Panc1 (cell line): ENCODE measurements at regions of chr2 and their contacts with region 1.

Region 1: DNA sequence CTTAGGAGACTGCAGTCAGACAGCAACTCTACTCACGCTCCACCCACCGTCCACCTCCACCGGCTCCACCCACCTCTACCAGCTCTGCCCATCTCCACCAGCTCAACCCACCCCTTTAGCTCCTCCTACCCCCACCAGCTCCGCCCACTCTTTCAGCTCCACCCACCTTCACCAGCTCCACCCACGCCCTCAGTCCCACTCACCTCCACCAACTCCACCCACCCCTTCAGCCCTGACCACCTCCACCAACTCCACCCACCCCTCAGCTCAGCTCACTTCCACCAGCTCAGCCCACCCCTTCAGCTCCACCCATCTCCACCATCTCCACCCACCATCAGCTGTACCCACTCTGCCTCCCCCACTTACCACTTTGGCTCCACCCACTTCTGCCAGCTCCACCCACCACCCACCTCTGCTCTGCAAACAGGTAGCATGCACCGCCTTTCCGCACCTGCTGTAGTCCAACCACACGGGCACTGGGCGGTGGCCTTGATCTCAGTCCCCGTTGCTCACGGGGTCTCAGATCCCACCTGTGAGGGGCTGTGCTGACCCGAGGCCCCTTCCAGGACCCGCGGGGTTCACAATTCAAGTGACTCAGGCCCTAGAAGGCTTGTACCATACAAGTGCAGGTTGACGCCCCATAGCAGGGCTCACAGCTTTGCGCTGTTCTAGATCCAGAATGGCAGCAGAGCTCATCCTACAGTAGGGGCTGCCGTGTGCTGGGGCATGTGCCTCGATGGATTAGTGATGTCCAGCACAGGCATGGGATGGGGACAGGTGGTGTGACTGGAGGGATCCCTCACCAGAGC is 77.2 kb upstream of the OTOS start:
- DNase-seq: no peak
- ATAC-seq: peak; percentile 56; the same call in 1 of the 2 replicates
- H3K4me3 ChIP-seq: no peak overlapping the region
- H3K27ac ChIP-seq: no peak overlapping the region
- H3K4me1 ChIP-seq: no peaks in the 10 kb centered on the region
- H3K27me3 ChIP-seq: peaks cover 8% of the 10 kb centered on the region; the same call in 1 of the 2 replicates
- CTCF ChIP-seq: no peak

Region 2: DNA sequence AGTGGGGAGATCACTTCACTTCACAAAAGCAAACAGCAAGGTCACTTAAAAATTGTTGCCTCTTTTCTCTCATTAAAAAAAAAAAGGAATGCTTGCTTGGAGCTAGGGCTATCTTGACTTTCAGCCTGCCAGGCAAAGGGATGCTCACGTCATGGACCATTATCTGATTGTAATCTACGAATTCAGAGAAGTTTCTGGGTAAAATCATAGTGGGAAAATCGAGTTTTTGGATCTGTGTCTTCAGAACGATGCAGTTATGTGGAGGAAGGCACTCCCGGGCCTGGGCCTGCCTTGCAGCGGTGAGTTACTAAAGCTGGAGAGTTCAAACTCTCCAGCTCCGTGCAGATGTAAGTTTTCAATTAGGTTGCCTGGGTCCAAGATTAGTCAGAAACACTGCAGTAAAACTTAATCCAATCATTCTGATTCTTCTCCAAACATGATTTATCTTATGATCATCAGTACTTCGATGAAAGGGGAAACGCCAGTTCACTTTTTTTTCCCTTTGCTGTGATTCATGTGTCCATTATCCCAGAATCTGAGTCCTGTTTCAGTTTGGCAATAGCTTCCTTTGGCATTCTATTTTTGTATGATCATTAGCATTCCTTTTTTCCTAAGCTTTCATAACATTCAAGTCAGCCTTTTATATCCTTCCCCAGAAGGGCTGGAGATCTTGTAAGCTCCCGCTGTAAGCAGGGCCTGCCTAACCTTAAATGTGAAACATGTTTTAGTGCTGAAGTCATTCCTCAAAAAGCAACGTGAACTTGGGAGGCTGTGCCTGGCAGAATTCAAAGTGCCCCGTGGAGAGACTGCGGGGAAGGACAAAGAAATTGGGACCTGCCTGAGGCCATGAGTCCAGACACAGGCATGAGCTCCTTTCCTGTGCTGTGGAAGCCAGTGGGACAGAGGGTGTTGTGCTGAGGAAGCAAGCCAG is 1489.0 kb before region 1 on chr2:
- CTCF ChIA-PET with region 1: no interaction called
- POLR2A ChIA-PET with region 1: no interaction called
- in situ Hi-C with region 1: no loop called
- intact Hi-C with region 1: loop called (anchors 10 kb)
- DNase-seq: no peak
- ATAC-seq: no peak
- H3K4me3 ChIP-seq: no peak overlapping the region
- H3K27ac ChIP-seq: no peak overlapping the region
- H3K4me1 ChIP-seq: no peaks in the 10 kb centered on the region
- H3K27me3 ChIP-seq: no peaks in the 10 kb centered on the region
- CTCF ChIP-seq: no peak

Region 3: DNA sequence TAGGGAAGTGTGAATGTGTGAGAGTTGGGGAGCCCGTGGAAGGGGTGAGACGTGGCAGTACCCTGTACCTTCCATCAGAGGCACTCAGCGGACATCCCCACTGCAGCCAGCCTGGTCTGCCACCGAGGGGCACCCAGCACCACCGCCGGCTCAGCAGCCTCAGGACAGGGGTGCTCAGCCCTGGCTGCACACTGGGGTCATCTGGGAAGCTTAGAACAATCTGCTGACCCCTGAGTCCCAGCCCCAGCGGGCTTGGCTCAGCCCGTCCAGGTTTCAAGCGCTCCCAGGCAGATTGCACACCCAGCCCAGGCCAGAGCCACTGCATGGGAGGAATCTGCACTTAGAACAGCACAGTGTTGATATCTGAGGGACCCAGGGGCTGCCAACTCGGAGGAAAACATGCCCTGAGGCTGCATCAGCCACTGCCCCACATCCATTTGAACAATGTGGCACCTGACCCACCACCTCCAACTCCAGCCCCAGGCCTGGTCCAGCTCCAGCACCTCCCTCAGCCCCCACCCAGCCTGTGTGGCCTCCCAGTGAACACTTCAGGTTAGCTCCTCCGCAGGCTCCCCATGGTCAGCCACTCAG is 70.0 kb after region 1 on chr2:
- CTCF ChIA-PET with region 1: no interaction called
- POLR2A ChIA-PET with region 1: no interaction called
- in situ Hi-C with region 1: no loop called
- intact Hi-C with region 1: no loop called
- DNase-seq: no peak
- ATAC-seq: peak; percentile 65
- H3K4me3 ChIP-seq: no peak overlapping the region
- H3K27ac ChIP-seq: no peak overlapping the region
- H3K4me1 ChIP-seq: no peaks in the 10 kb centered on the region
- H3K27me3 ChIP-seq: no peaks in the 10 kb centered on the region
- CTCF ChIP-seq: no peak